GM13976 (cell line): ENCODE measurements at regions of chr16 and their contacts with region 1.

Region 1: GRCh38 chr16:57084257-57084770 is 8.1 kb upstream of the CPNE2 start:
- DNase-seq: peak; percentile 89
- CTCF ChIP-seq: peak; percentile 96

Region 2: DNA sequence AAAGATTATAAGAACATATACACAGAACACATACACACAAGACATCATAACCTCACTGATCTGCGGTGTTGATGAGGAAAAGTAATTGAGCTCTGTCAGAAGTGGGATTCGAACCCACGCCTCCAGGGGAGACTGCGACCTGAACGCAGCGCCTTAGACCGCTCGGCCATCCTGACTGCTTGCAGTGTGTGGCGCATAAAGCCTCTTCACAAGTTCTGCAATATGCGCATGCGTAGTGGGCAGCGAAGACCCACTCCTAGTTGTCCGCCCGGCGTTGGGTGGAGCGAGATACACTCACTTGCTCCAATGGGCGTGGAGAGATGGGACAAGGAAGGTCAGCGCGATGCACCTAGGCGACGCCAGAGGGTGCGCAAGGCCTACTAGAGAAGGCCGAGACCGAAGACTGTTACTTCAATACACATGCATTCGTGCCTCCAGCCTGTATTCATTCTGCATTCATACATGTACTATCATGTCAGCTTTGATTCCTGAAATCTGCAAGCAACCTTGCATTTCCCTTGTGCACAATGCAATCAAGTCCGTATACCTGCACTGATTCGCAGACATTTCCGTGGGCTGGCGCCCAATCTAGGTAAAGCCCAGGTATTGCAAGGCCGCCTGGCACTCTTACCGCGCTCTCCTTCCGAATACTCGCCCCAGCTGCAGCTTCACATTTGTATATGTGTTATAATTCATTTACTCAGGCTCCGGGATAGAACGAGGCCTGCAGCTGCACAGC is 216.2 kb after region 1 on chr16:
- in situ Hi-C with region 1: loop called (anchors 10 kb)
- DNase-seq: peak; percentile 94
- CTCF ChIP-seq: peak; percentile 91

Region 3: GRCh38 chr16:57422026-57422944 is 338.0 kb after region 1 on chr16:
- in situ Hi-C with region 1: loop called (anchors 25 kb)
- DNase-seq: no peak
- CTCF ChIP-seq: peak; percentile 9